ENCODE measurements at regions of chr1 and their contacts with region 1.

Region 1: GRCh38 chr1:53878492-53879105 is 11.0 kb downstream of the YIPF1 start:
- DNase-seq: peak; percentile 59 to 78 (median 77)
- H3K4me3 ChIP-seq: no peak overlapping the region
- H3K27ac ChIP-seq: no peak overlapping the region
- H3K4me1 ChIP-seq: no peaks in the 10 kb centered on the region
- H3K27me3 ChIP-seq: no peaks in the 10 kb centered on the region

Region 2: GRCh38 chr1:53837924-53838652 is 40.5 kb before region 1 on chr1 and contains the start of gene NDC1:
- CTCF ChIA-PET with region 1: no interaction called
- POLR2A ChIA-PET with region 1: no interaction called
- DNase-seq: peak; percentile 93 to 96 (median 95)
- H3K4me3 ChIP-seq: peak within 1 kb of the TSS; percentile 87 to 99 (median 97)
- H3K27ac ChIP-seq: peak within 1 kb of the TSS; percentile 98 to 99
- H3K4me1 ChIP-seq: peaks cover 0 to 15% (median 8%) of the 10 kb centered on the region in 4 experiments
- H3K27me3 ChIP-seq: no peaks in the 10 kb centered on the region

Region 3: GRCh38 chr1:53860967-53861411 is 17.6 kb before region 1 on chr1:
- CTCF ChIA-PET with region 1: interaction called, 54 read pairs
- POLR2A ChIA-PET with region 1: no interaction called
- DNase-seq: peak; percentile 63 to 78 (median 72)
- H3K4me3 ChIP-seq: no peak overlapping the region
- H3K27ac ChIP-seq: no peak overlapping the region
- H3K4me1 ChIP-seq: peaks cover 0 to 7% (median 3%) of the 10 kb centered on the region in 4 experiments
- H3K27me3 ChIP-seq: no peaks in the 10 kb centered on the region

Region 4: GRCh38 chr1:53899206-53899628 is 20.6 kb after region 1 on chr1:
- CTCF ChIA-PET with region 1: interaction called, 17 read pairs
- POLR2A ChIA-PET with region 1: no interaction called
- DNase-seq: peak in 1 of 3 donors; percentile 12
- H3K4me3 ChIP-seq: no peak overlapping the region
- H3K27ac ChIP-seq: no peak overlapping the region
- H3K4me1 ChIP-seq: peaks cover 0 to 2% (median 0%) of the 10 kb centered on the region in 4 experiments
- H3K27me3 ChIP-seq: no peaks in the 10 kb centered on the region

Region 5: GRCh38 chr1:53959664-53960250 is 81.2 kb after region 1 on chr1:
- CTCF ChIA-PET with region 1: interaction called, 52 read pairs
- POLR2A ChIA-PET with region 1: no interaction called
- DNase-seq: peak; percentile 62 to 85 (median 76)
- H3K4me3 ChIP-seq: no peak overlapping the region
- H3K27ac ChIP-seq: no peak overlapping the region
- H3K4me1 ChIP-seq: peaks cover 0 to 8% (median 2%) of the 10 kb centered on the region in 4 experiments
- H3K27me3 ChIP-seq: no peaks in the 10 kb centered on the region